Mammary epithelial cell (primary cell): ENCODE measurements at regions of chr21 and their contacts with region 1.

Region 1: GRCh38 chr21:36783612-36784383 is 84.9 kb downstream of the SIM2 start:
- DNase-seq: peak; percentile 77
- H3K4me3 ChIP-seq: no peak overlapping the region
- H3K27ac ChIP-seq: no peak overlapping the region
- H3K4me1 ChIP-seq: peaks cover 16% of the 10 kb centered on the region
- H3K27me3 ChIP-seq: no peaks in the 10 kb centered on the region
- CTCF ChIP-seq: no peak

Region 2: DNA sequence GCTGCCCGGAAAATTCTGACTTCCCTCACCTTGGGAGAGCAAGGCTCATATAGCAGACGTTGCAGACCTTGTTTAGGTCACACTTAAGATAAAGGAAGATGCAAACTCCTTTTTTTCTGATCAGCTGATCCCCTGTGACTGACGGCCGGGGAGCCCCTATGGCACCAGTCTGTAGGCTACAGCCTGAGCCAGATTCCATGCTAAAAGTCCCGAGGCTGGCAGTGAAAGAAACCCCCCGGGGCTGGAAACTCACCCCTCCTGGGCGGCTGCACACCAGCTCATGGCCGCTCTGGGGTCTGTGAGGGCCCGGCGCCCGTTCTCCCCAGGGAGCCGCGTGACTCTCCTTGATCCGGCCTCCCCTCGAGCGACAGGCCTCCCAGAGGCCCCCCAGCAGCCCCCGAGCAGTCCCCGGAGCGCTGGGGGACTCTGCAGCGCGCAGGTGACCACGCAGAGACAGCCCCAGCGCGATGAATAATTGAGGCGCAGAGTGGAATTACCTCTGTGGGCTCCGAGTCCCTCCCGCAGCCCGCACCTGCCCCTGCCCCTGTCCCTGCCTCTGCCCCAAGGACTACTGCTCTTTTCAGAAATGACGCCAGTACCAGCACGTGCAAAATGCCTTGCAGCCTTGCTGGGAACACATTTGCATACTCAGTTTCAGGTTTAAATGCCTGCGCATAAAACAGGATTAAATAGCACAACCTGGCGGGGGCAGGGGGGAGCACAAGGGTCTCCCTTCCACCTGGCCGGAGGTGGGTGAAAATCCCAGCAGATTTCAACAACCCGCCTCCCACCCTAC is 241.3 kb before region 1 on chr21:
- CTCF ChIA-PET with region 1: no interaction called
- dilution Hi-C with region 1: no loop called
- in situ Hi-C with region 1: no loop called
- intact Hi-C with region 1: no loop called
- DNase-seq: no peak
- H3K4me3 ChIP-seq: no peak overlapping the region
- H3K27ac ChIP-seq: no peak overlapping the region
- H3K4me1 ChIP-seq: no peaks in the 10 kb centered on the region
- H3K27me3 ChIP-seq: peaks cover 18% of the 10 kb centered on the region
- CTCF ChIP-seq: peak in 1 of 2 donors; percentile 23

Region 3: GRCh38 chr21:36847171-36847570 is 63.4 kb after region 1 on chr21:
- CTCF ChIA-PET with region 1: interaction called, 10 read pairs
- dilution Hi-C with region 1: no loop called
- in situ Hi-C with region 1: no loop called
- intact Hi-C with region 1: no loop called
- DNase-seq: peak; percentile 75
- H3K4me3 ChIP-seq: peak overlapping the region in 1 of 3 experiments; percentile 17
- H3K27ac ChIP-seq: peak overlapping the region; percentile 85
- H3K4me1 ChIP-seq: peaks cover 10% of the 10 kb centered on the region
- H3K27me3 ChIP-seq: no peaks in the 10 kb centered on the region
- CTCF ChIP-seq: no peak

Region 4: DNA sequence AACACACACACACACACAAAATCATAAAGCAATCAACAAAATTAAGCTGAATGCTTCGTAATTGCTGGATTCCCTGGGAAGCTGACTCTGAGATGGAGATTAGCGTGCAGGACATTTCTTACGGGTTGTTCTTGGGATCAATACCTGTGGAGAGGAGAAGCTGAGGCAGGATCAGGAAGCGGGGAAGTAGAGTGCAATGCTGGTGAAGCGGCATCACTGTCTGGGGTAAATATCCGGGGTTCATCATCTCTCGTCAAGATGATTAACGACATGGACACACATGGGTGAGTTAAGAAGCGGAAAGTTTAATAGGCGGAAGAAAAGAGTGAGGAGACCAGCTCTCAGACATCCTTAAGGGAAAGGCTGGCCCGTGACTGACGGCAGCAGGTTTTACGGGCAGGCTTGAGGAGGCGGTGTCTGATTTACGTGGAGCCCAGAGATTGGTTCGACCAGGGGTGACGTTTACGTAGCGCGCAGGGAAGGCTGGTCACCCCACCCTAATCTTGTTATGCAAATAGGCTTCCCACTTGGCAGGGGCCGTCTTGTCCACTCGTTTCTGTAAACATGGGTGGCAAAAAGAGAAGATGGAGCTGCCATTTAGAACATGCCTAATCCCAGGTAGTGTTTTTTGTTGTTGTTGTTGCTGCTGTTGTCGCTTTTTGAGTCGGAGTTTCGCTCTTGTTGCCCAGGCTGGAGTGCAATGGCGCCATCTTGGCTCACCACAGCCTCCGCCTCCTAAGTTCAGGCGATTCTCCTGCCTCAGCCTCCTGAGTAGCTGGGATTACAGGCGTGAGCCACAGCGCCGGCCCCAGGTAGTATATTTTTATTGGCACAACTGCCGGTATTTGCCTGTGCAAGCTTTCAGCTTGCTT is 1337.4 kb after region 1 on chr21:
- CTCF ChIA-PET with region 1: no interaction called
- dilution Hi-C with region 1: no loop called
- in situ Hi-C with region 1: no loop called
- intact Hi-C with region 1: no loop called
- DNase-seq: no peak
- H3K4me3 ChIP-seq: no peak overlapping the region
- H3K27ac ChIP-seq: no peak overlapping the region
- H3K4me1 ChIP-seq: no peaks in the 10 kb centered on the region
- H3K27me3 ChIP-seq: no peaks in the 10 kb centered on the region
- CTCF ChIP-seq: no peak